Activated CD4-positive, alpha-beta memory T cell treated with anti-CD3 and anti-CD28 coated beads for 36 hours (primary cell): ENCODE measurements at regions of chr6 and their contacts with region 1.

Region 1: DNA sequence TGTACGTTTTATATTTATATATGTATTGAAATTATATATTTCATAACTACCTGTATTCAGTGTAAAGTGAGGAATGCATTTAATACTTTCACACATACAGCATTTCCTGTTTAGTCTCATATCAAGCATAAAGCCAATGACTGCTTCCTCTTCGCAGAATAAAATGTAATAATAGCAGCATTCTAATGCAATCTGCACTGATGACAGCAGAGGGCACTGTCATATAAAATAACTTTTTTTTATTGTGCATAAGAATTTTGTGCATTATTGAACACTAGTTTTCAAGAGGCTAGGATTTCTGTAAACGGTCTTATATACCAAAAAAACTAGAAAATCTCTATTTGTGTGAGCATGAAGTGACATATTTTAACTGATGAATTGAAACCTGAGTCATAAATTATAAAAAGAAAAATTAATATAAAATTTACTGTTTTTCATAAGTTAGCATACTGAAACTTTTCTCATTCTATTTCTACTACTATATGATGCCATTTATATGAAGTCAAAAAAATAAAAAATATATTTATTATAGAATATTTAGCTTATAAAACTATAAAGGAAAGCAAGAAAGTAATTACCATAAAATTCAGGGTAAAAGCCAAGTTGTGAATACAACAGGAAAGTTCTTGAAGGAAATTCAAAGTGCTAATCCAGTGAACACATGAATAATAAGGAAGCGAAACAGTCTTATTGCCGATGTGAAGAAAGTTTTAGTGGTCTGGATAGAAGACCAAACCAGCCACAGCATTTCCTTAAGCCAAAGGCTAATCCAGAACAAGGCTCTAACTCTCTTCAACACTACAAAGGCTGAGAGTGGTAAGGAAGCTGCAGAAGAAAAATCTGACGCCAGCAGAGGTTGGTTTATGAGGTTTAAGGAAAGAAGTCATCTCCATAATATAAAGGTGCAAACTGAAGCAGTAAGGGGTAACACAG is 36.3 kb downstream of the RNF146 start:
- DNase-seq: peak; percentile 41
- H3K4me3 Mint-ChIP-seq: no peak overlapping the region
- H3K27ac Mint-ChIP-seq: peak overlapping the region; percentile 15
- H3K4me1 Mint-ChIP-seq: peaks cover 32% of the 10 kb centered on the region
- H3K27me3 Mint-ChIP-seq: no peaks in the 10 kb centered on the region

Region 2: DNA sequence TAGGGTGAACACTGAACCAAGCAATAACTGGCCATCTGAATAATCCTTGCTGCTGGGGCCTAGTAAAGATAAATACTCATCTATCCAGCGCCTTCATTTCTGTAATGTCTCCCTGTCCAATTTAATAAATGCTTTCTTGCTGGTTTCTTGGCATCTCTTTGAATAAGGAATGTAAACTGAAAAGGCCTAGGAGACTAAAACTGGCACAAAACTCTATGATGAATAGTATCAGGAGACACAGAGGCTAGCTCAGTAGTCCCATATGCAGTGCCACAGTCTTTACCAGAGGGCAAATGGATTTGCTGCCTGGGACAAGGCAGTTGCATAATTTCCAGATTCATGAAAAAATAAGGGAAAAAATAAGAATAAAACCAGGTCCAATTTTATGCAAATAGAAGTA is 638.7 kb before region 1 on chr6:
- CTCF ChIA-PET with region 1: no interaction called
- POLR2A ChIA-PET with region 1: no interaction called
- intact Hi-C with region 1: no loop called
- DNase-seq: no peak
- H3K4me3 Mint-ChIP-seq: no peak overlapping the region
- H3K27ac Mint-ChIP-seq: no peak overlapping the region
- H3K4me1 Mint-ChIP-seq: no peaks in the 10 kb centered on the region
- H3K27me3 Mint-ChIP-seq: no peaks in the 10 kb centered on the region

Region 3: DNA sequence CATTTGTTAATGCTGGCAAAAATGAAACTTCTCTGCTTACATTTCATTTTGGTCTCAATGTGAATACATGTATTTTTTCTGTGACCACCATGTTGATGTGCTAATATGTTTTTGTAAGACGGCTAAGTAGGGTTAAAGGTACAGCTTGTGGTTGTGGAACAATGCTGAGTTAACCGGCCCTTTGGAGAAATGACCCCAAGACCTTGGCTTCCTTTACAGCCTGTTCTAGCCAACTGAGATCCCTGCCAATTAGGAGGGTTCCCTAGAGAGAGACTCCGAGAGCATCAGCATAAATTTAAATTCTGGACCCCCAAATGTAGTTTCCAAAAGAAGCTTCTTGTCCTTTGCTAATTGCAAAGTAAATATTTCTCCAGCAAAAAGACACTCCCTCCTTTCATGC is 140.2 kb before region 1 on chr6:
- CTCF ChIA-PET with region 1: no interaction called
- POLR2A ChIA-PET with region 1: no interaction called
- intact Hi-C with region 1: no loop called
- DNase-seq: no peak
- H3K4me3 Mint-ChIP-seq: no peak overlapping the region
- H3K27ac Mint-ChIP-seq: no peak overlapping the region
- H3K4me1 Mint-ChIP-seq: no peaks in the 10 kb centered on the region
- H3K27me3 Mint-ChIP-seq: peaks cover 7% of the 10 kb centered on the region

Region 4: DNA sequence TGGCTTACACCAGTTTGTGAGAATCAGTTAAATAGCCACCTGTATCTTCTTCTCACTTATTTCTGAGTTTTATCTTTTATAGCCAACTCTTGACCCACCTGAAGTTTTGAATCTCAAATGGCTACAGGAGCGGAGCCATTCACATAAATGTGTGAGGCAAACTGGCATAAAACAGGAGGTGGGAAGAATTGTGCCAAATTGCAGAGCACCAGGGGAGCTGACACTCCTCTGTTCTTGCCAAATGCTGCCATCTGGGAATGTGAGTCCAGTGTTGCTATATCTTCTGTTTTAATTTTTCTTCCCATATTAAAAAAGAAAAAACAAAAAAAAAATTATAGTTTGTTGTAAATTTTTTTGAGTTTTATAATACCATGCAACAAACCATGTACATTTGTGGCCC is 53.4 kb before region 1 on chr6:
- CTCF ChIA-PET with region 1: no interaction called
- POLR2A ChIA-PET with region 1: no interaction called
- intact Hi-C with region 1: no loop called
- DNase-seq: no peak
- H3K4me3 Mint-ChIP-seq: no peak overlapping the region
- H3K27ac Mint-ChIP-seq: no peak overlapping the region
- H3K4me1 Mint-ChIP-seq: no peaks in the 10 kb centered on the region
- H3K27me3 Mint-ChIP-seq: peaks cover 3% of the 10 kb centered on the region

Region 5: GRCh38 chr6:127342946-127343808 is 40.2 kb after region 1 on chr6 and contains the start of gene ECHDC1:
- CTCF ChIA-PET with region 1: interaction called, 4 read pairs
- POLR2A ChIA-PET with region 1: no interaction called
- intact Hi-C with region 1: loop called (anchors 2 kb)
- DNase-seq: peak; percentile 83
- H3K4me3 Mint-ChIP-seq: no peak within 1 kb of the TSS
- H3K27ac Mint-ChIP-seq: no peak within 1 kb of the TSS
- H3K4me1 Mint-ChIP-seq: peaks cover 7% of the 10 kb centered on the region
- H3K27me3 Mint-ChIP-seq: no peaks in the 10 kb centered on the region
- total RNA-seq, gene ECHDC1: 42.9 to 43.7 TPM

Region 6: DNA sequence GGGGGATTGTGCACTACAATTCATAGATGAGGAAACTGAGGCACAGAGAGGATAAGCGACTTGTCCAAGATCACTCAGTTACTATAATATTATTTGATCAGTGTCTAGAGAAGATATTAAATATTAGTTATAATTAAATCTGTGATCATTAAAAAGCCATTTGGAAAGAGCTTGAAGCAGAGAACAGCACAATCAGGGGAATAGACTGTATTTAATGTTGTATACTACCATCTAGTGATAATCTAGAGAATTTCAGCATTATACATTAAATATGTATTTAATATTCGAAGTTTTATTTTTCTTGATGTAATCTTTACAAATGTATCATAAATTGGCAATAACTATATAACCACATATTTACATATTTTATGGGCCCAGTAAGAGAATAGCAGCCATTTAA is 236.3 kb after region 1 on chr6:
- CTCF ChIA-PET with region 1: interaction called, 35 read pairs
- POLR2A ChIA-PET with region 1: no interaction called
- intact Hi-C with region 1: loop called (anchors 1 kb)
- DNase-seq: no peak
- H3K4me3 Mint-ChIP-seq: no peak overlapping the region
- H3K27ac Mint-ChIP-seq: no peak overlapping the region
- H3K4me1 Mint-ChIP-seq: peaks cover 3% of the 10 kb centered on the region
- H3K27me3 Mint-ChIP-seq: peaks cover 13% of the 10 kb centered on the region